Heart right ventricle (tissue), 16 donors: ENCODE measurements at regions of chr11 and their contacts with region 1.

Region 1: DNA sequence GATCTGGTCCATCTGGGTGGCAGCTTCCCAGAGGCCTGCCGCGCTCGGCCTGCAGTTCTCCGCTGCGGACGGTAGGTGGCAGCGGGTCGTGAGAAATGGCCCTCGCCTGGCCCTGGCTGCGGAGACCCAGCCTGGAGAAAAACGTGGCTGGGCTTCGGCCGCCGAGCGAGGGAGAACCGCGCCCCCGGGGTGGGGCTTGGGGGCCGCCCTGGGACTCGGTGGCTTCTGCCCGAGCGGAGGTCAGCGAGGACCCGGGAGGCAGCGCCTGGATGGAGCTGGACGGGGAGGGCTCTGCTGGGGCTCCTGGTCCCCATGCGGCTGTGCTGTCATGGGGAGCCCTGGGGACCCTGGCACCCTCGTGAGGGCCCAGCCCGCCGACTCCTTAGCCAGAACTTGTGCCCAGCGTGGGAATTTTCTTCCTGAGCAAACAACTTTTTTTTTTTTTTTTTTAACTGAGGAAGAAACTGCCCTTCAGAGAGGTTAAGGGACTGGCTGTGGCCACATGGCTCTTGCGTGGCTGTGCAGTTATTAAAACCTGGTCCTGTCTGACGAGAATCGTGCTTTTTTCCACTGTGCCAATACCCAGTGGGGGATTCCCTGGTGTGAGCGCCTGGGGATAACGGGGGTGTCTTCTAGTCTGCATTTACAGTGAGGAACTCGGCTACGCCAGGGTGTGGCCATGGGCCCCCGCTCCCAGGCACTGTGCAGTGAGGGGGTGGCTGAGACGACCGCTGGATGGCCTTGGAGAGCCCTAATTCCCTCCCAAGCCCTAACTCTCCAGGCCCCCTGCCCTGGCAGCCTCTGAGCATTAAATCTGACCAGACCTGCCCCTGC is 535.6 kb downstream of the INSC start:
- DNase-seq: peak; percentile 95 to 97
- ATAC-seq: peak; percentile 99 to 100 (median 99)
- H3K4me3 ChIP-seq: peak overlapping the region in 9 of 10 donors; percentile 18 to 48 (median 42)
- H3K27ac ChIP-seq: peak overlapping the region; percentile 14 to 87 (median 80)
- H3K4me1 ChIP-seq: peaks cover 5 to 28% (median 16%) of the 10 kb centered on the region in 9 donors
- H3K27me3 ChIP-seq: peaks cover 0 to 27% (median 0%) of the 10 kb centered on the region in 7 donors
- CTCF ChIP-seq: peak; percentile 92 to 100 (median 99)

Region 2: DNA sequence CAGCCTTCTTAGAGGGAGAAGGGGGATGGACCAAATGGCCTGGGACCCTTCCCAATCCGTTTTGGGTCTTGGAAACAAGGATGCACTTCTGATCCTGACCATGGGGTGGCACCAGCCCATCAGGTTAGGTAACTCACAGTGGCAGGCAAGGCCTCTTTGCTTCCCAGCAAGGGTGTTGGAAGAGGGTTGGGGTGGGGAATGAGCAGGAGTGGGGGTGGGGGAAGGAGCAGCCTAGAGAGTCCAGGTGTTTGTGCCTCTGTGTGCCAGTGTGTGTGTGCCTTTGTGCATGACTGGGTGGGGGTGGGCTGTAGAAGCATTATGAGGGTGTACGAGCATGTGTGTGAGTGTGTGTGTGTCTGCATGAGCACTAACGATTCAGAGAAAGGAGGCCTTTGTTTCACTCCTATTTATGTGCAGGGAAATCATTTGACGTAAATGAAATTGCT is 322.5 kb before region 1 on chr11:
- intact Hi-C with region 1: loop called in 7 of 10 experiments (anchors 5 to 10 kb)
- DNase-seq: peak; percentile 25 to 50
- ATAC-seq: peak; percentile 71 to 92 (median 78)
- H3K4me3 ChIP-seq: no peak overlapping the region
- H3K27ac ChIP-seq: no peak overlapping the region
- H3K4me1 ChIP-seq: no peaks in the 10 kb centered on the region
- H3K27me3 ChIP-seq: no peaks in the 10 kb centered on the region
- CTCF ChIP-seq: peak; percentile 45 to 79 (median 71)

Region 3: DNA sequence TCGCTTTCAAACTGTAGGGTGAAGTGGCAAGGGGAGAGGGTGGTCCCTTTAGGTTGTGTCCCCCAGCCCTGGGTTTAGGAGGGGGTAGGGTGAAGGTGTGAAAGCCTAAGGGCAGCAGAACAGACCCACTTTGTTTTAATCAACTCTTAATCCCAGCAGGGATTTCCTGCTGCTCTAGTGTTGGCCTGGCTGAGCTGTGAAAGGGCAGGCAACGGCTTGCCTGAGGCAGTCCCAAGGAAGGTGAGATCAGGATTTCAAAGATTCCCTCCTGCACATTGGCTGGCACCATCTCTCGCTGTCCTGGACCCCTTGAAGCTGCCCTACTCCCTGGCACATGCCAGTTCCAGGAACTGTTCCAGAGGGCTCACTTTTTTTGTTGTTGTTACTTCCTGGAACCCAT is 314.3 kb before region 1 on chr11:
- intact Hi-C with region 1: loop called in 1 of 10 experiments (anchors 10 kb)
- DNase-seq: no peak
- ATAC-seq: no peak
- H3K4me3 ChIP-seq: no peak overlapping the region
- H3K27ac ChIP-seq: no peak overlapping the region
- H3K4me1 ChIP-seq: no peaks in the 10 kb centered on the region
- H3K27me3 ChIP-seq: peaks cover 0 to 4% (median 0%) of the 10 kb centered on the region in 7 donors
- CTCF ChIP-seq: no peak

Region 4: GRCh38 chr11:15507592-15507991 is 142.7 kb before region 1 on chr11:
- intact Hi-C with region 1: loop called in 1 of 10 experiments (anchors 1 kb)
- DNase-seq: no peak
- ATAC-seq: no peak
- H3K4me3 ChIP-seq: no peak overlapping the region
- H3K27ac ChIP-seq: no peak overlapping the region
- H3K4me1 ChIP-seq: no peaks in the 10 kb centered on the region
- H3K27me3 ChIP-seq: no peaks in the 10 kb centered on the region
- CTCF ChIP-seq: no peak

Region 5: DNA sequence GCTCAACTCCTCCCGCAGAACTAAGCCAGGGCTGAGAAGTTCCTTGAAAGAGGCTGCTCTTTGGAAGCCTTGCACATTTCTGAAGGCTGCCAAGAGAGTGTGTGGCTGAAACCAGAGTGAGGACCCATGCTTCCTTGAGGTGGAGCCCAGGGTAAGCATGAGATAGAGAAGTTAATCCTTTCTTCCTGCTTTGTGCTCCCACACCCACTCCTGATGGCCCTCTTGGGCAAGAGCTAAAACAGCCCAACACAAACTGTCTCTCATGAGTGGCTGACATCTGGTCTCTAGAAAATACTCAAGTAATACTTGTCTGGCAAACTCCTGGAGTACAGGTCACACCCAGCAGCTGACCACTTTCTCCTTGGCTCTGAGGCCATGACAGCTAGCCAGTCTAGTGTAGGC is 11.9 kb before region 1 on chr11:
- intact Hi-C with region 1: no loop called
- DNase-seq: no peak
- ATAC-seq: peak in 7 of 8 donors; percentile 41 to 71 (median 61)
- H3K4me3 ChIP-seq: no peak overlapping the region
- H3K27ac ChIP-seq: peak overlapping the region in 1 of 10 donors; percentile 32
- H3K4me1 ChIP-seq: peaks cover 0 to 5% (median 0%) of the 10 kb centered on the region in 9 donors
- H3K27me3 ChIP-seq: no peaks in the 10 kb centered on the region
- CTCF ChIP-seq: no peak

Region 6: DNA sequence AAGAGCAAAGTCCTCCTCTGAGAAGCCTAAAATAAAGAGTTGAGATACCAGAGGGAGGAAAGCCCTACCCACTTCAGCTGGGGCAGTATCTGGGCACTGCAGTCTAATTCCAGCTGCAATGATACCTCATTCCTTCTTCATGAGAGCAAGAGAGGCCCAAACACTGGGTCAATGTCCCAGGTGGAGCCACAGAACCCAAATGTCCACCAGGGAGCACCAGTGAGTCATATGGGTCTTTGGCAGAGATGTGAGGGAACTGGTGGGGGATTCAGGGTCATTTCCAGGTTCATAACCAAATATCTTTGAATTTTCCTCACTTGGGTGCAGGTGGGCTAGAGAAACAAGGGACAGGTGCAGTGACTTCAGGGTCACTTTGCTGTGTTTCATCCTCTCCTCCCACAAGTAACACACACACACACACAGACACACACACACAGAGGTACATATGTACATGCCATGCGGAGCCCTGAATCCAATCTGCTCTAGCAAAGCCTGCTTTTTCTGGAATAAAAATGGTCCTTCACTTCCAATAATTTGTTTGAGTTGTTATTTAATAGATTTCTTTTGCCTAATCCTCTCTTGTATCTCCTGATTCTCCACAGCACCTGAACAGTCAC is 120.6 kb after region 1 on chr11:
- intact Hi-C with region 1: loop called in 1 of 10 experiments (anchors 5 kb)
- DNase-seq: peak in 1 of 2 donors; percentile 52
- ATAC-seq: no peak
- H3K4me3 ChIP-seq: no peak overlapping the region
- H3K27ac ChIP-seq: no peak overlapping the region
- H3K4me1 ChIP-seq: peaks cover 0 to 27% (median 9%) of the 10 kb centered on the region in 9 donors
- H3K27me3 ChIP-seq: peaks cover 0 to 3% (median 0%) of the 10 kb centered on the region in 7 donors
- CTCF ChIP-seq: peak; percentile 28 to 76 (median 64)

Region 7: GRCh38 chr11:15819679-15820286 is 169.5 kb after region 1 on chr11:
- intact Hi-C with region 1: loop called in 6 of 10 experiments (anchors 1 to 10 kb)
- DNase-seq: peak; percentile 79 to 84
- ATAC-seq: peak; percentile 71 to 93 (median 86)
- H3K4me3 ChIP-seq: no peak overlapping the region
- H3K27ac ChIP-seq: peak overlapping the region in 2 of 10 donors; percentile 18 to 37
- H3K4me1 ChIP-seq: peaks cover 7 to 61% (median 50%) of the 10 kb centered on the region in 9 donors
- H3K27me3 ChIP-seq: no peaks in the 10 kb centered on the region
- CTCF ChIP-seq: peak; percentile 80 to 97 (median 90)

Region 8: DNA sequence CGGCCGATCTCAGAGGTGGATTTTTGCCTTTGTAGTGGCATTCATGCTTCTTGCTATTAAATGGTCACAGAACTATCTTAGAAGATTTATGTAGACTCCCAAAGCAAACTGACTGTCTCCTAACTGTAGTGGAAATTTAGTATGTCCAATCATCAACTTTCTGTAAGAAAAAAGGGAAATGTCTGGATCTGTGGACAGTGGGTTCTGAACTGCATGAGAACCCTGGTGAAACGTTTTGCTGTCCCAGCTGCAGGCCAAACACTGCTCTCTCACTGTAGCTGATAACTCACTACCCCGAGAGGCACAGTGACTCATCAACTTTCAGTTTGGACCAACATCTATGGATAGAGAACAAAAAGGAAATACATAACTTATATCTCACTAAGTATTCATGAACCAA is 319.0 kb after region 1 on chr11:
- intact Hi-C with region 1: loop called in 1 of 10 experiments (anchors 5 kb)
- DNase-seq: peak; percentile 42 to 81
- ATAC-seq: peak; percentile 84 to 93 (median 91)
- H3K4me3 ChIP-seq: peak overlapping the region in 4 of 10 donors; percentile 1 to 26 (median 12)
- H3K27ac ChIP-seq: peak overlapping the region; percentile 77 to 92 (median 83)
- H3K4me1 ChIP-seq: peaks cover 10 to 57% (median 40%) of the 10 kb centered on the region in 9 donors
- H3K27me3 ChIP-seq: no peaks in the 10 kb centered on the region
- CTCF ChIP-seq: no peak